Activated T-helper 2 cell treated with anti-CD3 and anti-CD28 coated beads, Interferon-gamma antibody, Interleukin-2, Interleukin-4, amounts not matched to agents 10 μg/mL and 5 μg/mL and 100 μg/mL, durations not matched to agents 14 hours and 24 hours and 36 hours (primary cell): ENCODE measurements at regions of chr22 and their contacts with region 1.

Region 1: DNA sequence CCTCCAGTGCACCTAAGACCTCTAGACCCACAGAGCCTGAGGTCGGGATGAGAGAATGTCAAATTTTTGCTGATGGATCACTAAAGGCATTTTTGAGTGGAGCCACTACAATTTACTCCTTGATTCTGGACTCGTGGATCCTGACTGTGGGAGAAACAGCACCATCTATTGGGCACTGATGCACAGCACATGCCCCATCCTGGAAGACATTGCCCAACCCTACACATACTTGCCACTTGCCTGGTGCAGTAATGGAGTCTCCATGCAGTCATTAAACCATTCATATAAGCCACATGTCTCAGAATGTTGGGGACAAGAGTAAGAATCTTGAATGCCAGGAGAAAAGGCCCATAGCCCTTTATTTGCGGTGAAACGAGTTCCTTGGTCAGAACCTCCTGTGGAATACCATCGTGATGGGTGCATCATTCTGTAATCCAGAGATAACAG is 103.9 kb downstream of the GGTLC2 start:
- DNase-seq: no peak
- H3K4me3 Mint-ChIP-seq: no peak overlapping the region
- H3K27ac Mint-ChIP-seq: no peak overlapping the region
- H3K4me1 Mint-ChIP-seq: peaks cover 3% of the 10 kb centered on the region
- H3K27me3 Mint-ChIP-seq: peaks cover 10% of the 10 kb centered on the region

Region 2: DNA sequence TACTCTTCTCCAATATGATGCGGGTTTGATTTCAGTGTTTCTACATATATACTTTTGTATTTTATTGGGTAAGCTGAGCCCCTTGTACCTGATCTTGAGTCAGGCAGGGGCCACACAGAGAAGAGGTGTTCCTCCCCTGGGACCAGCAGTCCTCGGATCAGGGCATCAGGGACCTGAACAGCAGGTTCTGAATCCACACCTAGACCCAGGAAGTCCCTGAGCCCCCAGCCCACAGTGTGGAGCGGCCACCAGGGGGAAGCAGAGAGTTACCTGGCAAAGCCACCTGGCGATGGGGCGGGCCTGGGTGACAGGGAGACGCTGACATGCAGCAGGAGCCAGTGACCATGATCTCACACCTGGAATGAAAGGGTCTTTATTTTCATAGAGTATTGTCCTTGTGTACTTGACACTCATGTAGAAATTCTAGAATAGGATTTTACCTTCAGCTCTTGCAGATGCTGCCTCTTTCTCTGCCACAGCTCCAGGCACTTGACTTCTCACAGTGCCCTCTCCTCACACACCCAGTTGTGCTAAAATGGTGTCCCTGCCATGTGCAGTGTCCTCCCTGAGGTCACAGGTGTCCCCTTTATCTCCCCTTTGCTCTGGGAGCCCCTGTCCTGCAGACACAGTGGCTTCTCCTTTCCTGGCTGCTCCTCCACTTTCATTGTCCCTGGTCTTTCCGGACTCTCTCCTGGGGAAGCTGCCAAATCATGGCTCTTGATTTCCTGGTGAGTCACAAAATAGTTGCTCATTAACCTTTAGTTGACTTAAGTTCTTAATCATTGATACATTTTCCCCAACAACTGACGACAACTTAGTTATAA is 55.4 kb before region 1 on chr22:
- intact Hi-C with region 1: loop called (anchors 10 kb)
- DNase-seq: peak; percentile 25
- H3K4me3 Mint-ChIP-seq: no peak overlapping the region
- H3K27ac Mint-ChIP-seq: no peak overlapping the region
- H3K4me1 Mint-ChIP-seq: no peaks in the 10 kb centered on the region
- H3K27me3 Mint-ChIP-seq: peaks cover 5% of the 10 kb centered on the region

Region 3: DNA sequence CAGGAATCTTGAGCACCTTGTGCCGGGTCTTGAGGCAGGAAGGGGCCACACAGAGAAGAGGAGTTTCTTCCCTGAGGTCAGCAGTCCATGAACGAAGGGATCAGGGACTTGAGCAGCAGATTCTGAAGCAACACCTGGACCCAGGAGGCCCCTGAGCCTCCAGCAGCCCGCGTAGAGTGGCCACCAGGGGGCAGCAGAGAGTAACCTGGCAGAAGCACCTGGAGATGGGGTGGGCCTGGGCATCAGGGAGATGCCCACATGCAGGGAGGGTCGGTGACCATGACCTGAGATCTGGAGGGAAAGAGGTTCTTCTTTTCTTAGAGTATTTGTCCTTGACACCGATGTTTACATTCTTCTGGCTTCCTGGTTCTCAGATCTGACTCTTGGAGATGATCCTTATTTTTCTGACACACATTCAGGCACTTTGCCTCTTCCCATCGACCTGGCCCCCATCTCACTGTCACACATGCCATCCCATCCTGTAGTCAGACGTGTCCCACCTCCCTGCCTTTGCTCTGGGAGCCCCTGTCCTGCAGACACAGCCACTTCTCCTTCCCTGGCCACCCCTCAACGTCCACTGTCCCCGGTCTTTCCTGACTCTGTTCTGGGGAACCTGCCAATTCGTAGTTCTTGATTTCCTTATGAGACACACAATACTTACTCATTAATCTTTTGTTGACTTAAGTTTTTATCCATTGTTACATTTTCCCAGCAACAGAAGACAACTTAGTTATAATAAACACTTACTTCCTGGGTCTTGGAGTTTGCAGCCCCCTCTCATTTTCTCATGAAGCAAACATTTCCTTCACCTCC is 37.4 kb before region 1 on chr22:
- intact Hi-C with region 1: loop called (anchors 5 kb)
- DNase-seq: peak; percentile 58
- H3K4me3 Mint-ChIP-seq: no peak overlapping the region
- H3K27ac Mint-ChIP-seq: no peak overlapping the region
- H3K4me1 Mint-ChIP-seq: no peaks in the 10 kb centered on the region
- H3K27me3 Mint-ChIP-seq: peaks cover 2% of the 10 kb centered on the region